ENCODE measurements at regions of chr15 and their contacts with region 1.

Region 1: DNA sequence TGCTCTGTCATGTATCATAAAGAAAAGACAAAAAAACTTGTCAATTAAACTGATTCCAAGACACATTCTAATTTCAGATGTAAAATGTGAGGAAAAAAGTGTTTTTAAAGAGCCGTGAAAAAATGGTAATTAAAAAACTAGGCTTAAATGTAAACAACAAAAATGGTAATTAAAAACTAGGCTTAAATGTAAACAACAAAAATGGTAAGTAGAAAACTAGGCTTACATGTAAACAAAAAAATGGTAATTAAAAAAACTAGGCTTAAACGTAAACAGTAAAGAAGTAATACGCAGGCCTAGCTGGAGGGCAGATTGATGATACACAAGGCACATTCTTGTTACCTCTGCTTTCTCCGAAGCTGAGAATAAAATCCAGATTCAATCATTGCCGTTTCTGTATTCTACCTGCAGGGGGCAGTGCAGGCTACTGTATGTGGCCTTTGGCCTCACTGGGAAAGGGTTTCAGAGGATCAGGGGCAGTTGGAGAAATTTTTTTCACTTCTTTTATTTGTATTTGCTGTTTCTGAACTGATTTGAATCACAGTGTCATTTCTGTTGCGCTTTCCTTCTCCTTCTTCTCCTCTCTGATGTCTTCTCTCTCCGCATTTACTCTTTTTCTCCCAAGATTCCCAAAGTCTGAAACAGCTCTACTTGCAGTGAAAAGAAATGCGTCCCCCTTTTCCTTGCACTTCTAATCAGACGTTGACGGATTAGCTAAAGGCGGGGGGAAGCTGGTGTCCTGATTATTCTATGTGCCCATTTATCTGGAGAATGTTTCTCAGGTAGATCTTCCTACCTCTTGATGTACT is 67.2 kb upstream of the MCTP2 start:
- DNase-seq: peak; percentile 36
- ATAC-seq: peak; percentile 43

Region 2: GRCh38 chr15:94324117-94324826 is 160.1 kb after region 1 on chr15:
- intact Hi-C with region 1: loop called (anchors 5 kb)
- DNase-seq: no peak
- ATAC-seq: peak; percentile 90